ENCODE measurements at regions of chr11 and their contacts with region 1.

Region 1: GRCh38 chr11:4187055-4187988 is 92.7 kb downstream of the RRM1 start:
- DNase-seq: peak; percentile 81
- H3K4me3 ChIP-seq: peak overlapping the region; percentile 66
- H3K27ac ChIP-seq: no peak overlapping the region
- H3K4me1 ChIP-seq: no peaks in the 10 kb centered on the region
- CTCF ChIP-seq: peak; percentile 80

Region 2: DNA sequence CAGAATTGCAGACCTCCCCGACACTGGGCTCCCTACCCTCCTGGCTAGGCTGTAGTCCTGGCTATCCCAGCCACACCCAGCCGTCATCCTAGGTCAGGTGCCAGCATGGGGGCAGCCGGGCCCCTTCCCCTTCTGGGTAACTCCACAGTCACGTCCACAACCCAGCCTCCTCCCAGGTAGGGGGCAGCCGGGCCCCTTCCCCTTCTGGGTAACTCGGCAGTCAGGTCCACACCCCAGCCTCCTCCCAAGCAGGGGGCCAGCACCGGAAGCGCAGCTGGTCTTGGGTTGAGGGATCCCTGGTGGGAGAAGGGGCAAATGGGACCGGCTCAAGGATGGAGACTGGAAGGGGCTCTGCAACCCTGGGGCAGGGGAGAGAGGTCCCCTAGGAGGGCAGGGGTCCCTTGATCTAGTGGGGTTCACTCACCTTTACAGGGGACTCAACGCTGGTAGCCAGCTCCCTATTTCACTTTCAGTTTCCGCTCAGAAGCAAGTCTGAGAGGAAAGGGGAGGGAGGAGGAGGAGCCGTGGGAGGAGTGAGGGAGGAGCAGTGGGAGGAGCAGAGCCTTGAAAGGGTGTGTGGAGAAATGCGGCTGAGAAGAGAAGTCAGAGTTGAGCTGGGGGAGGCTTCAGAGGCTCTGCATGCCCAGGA is 206.0 kb after region 1 on chr11 and contains the start of gene TRIM21:
- CTCF ChIA-PET with region 1: interaction called, 5 read pairs
- POLR2A ChIA-PET with region 1: no interaction called
- intact Hi-C with region 1: loop called (anchors 1 kb)
- DNase-seq: peak; percentile 84
- H3K4me3 ChIP-seq: peak within 1 kb of the TSS; percentile 89
- H3K27ac ChIP-seq: no peak within 1 kb of the TSS
- H3K4me1 ChIP-seq: peaks cover 5% of the 10 kb centered on the region
- CTCF ChIP-seq: no peak
- total RNA-seq, gene TRIM21: 11.3 and 12.9 TPM in 2 replicates

Region 3: GRCh38 chr11:4493480-4493818 is 306.1 kb after region 1 on chr11:
- CTCF ChIA-PET with region 1: no interaction called
- POLR2A ChIA-PET with region 1: interaction called, 4 read pairs
- intact Hi-C with region 1: loop called (anchors 1 kb)
- DNase-seq: no peak
- H3K4me3 ChIP-seq: no peak overlapping the region
- H3K27ac ChIP-seq: no peak overlapping the region
- H3K4me1 ChIP-seq: no peaks in the 10 kb centered on the region
- CTCF ChIP-seq: peak; percentile 74

Region 4: GRCh38 chr11:4523666-4524065 is 336.3 kb after region 1 on chr11:
- CTCF ChIA-PET with region 1: no interaction called
- POLR2A ChIA-PET with region 1: no interaction called
- intact Hi-C with region 1: no loop called
- DNase-seq: no peak
- H3K4me3 ChIP-seq: no peak overlapping the region
- H3K27ac ChIP-seq: no peak overlapping the region
- H3K4me1 ChIP-seq: no peaks in the 10 kb centered on the region
- CTCF ChIP-seq: no peak

Region 5: GRCh38 chr11:4539603-4540219 is 352.4 kb after region 1 on chr11:
- CTCF ChIA-PET with region 1: interaction called, 6 read pairs
- POLR2A ChIA-PET with region 1: no interaction called
- intact Hi-C with region 1: loop called (anchors 1 kb)
- DNase-seq: peak; percentile 26
- H3K4me3 ChIP-seq: no peak overlapping the region
- H3K27ac ChIP-seq: no peak overlapping the region
- H3K4me1 ChIP-seq: no peaks in the 10 kb centered on the region
- CTCF ChIP-seq: peak; percentile 81

Region 6: GRCh38 chr11:4551346-4551979 is 364.1 kb after region 1 on chr11:
- CTCF ChIA-PET with region 1: no interaction called
- POLR2A ChIA-PET with region 1: no interaction called
- intact Hi-C with region 1: loop called (anchors 1 kb)
- DNase-seq: no peak
- H3K4me3 ChIP-seq: no peak overlapping the region
- H3K27ac ChIP-seq: no peak overlapping the region
- H3K4me1 ChIP-seq: no peaks in the 10 kb centered on the region
- CTCF ChIP-seq: peak; percentile 67

Region 7: GRCh38 chr11:4626207-4627099 is 439.1 kb after region 1 on chr11:
- CTCF ChIA-PET with region 1: no interaction called
- POLR2A ChIA-PET with region 1: no interaction called
- intact Hi-C with region 1: loop called (anchors 5 kb)
- DNase-seq: peak; percentile 82
- H3K4me3 ChIP-seq: no peak overlapping the region
- H3K27ac ChIP-seq: no peak overlapping the region
- H3K4me1 ChIP-seq: no peaks in the 10 kb centered on the region
- CTCF ChIP-seq: peak; percentile 87

Region 8: DNA sequence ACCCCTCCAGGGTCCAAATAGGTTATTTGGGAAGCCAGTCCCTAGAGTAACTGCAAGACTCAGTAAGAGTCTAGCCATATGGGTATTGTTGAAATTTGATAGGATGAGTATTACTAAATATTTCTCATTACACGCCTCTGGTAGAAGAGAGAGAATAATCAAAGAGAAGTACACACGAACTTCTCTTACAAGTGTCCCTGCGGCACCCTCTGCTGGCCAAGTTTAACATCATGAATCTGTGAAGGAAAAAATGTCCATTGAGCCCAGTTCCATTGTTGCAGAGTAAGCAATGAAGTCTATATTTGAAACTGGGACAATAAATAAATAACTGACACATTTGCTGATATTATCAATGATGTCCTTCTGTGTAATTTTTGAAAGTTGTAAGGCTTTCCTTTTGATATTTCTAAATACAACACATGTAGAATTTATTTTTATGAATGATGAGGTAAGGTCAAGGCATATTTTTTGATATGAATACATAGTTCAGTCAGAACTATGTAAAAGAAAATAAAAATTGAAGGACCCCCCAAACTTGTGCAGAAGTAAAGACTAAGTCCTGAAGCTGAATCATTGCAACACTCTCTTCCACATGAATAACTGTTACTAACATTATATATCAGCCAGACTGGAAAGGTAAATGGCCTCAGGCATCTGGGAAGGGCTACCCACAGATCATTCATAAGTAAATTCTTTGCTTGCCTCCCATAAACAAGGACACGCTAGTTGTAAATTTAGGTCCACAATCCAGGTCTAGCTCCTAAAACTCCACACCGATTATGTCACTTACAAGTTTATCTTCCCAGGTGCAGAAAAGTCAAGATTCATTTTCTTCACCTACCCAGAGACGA is 817.3 kb after region 1 on chr11:
- CTCF ChIA-PET with region 1: no interaction called
- POLR2A ChIA-PET with region 1: no interaction called
- intact Hi-C with region 1: loop called (anchors 1 kb)
- DNase-seq: peak; percentile 38
- H3K4me3 ChIP-seq: no peak overlapping the region
- H3K27ac ChIP-seq: no peak overlapping the region
- H3K4me1 ChIP-seq: no peaks in the 10 kb centered on the region
- CTCF ChIP-seq: peak; percentile 81

Measured in OCI-LY7 (cell line).